ENCODE measurements at regions of chr1 and their contacts with region 1.

Region 1: GRCh38 chr1:2044510-2045319 is 5.5 kb upstream of the PRKCZ start:
- DNase-seq: peak; percentile 73
- H3K4me3 Mint-ChIP-seq: peak overlapping the region; percentile 34
- H3K27ac Mint-ChIP-seq: no peak overlapping the region
- H3K4me1 Mint-ChIP-seq: peaks cover 19% of the 10 kb centered on the region
- H3K27me3 Mint-ChIP-seq: peaks cover 12% of the 10 kb centered on the region

Region 2: GRCh38 chr1:1943834-1944570 is 100.7 kb before region 1 on chr1:
- CTCF ChIA-PET with region 1: interaction called, 9 read pairs
- intact Hi-C with region 1: loop called (anchors 1 kb)
- DNase-seq: peak; percentile 57
- H3K4me3 Mint-ChIP-seq: no peak overlapping the region
- H3K27ac Mint-ChIP-seq: no peak overlapping the region
- H3K4me1 Mint-ChIP-seq: peaks cover 3% of the 10 kb centered on the region
- H3K27me3 Mint-ChIP-seq: no peaks in the 10 kb centered on the region

Region 3: GRCh38 chr1:1959840-1960479 is 84.8 kb before region 1 on chr1:
- CTCF ChIA-PET with region 1: interaction called, 52 read pairs
- intact Hi-C with region 1: loop called (anchors 1 kb)
- DNase-seq: peak; percentile 88
- H3K4me3 Mint-ChIP-seq: no peak overlapping the region
- H3K27ac Mint-ChIP-seq: no peak overlapping the region
- H3K4me1 Mint-ChIP-seq: peaks cover 8% of the 10 kb centered on the region
- H3K27me3 Mint-ChIP-seq: peaks cover 20% of the 10 kb centered on the region